ENCODE measurements at regions of chr6 and their contacts with region 1.

Region 1: DNA sequence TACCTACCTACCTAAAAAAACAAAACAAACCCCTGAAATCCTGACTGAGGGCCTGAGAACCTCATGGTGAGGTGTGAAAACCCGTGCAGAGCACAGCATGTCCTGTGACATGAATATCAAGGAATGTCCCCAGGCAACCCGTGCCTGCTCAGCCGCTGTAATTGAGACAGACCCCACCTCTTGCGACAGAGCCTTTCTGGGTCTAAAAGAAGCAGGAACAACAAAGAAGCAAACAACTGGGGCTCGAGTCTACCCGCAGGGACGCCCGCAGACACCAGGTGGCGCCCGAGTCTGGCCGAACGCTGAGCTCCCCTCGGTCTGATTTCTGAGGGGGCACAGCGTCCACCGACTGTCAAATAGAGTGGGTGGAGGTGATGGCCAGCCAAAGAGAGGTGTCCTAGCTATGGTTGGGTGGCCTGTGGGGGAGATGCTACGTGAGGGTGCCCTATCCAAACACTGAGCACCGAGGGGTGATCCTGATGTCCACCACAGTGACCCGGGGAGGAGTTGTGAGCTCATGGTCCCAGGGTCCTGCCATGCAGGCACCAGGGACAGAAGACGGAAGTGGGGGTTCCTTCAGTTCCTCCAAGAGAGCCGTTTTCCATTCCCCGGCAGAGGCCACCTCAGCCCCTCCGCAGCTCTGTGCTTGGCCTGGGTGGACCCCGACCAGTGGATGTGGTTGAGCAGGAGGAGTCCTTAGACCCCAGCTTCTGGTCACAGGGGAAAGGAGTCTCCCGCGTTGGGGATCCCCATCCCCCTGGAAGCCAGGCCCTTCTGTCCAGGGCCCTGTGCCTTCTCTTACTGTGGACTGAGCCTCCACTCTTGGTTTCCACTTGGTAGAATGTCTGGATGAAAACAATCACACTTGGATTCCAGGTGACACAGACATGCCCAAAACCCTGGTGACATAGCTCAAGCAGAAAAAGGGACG is 268.2 kb downstream of the CDC5L start:
- DNase-seq: peak; percentile 84
- H3K4me3 ChIP-seq: no peak overlapping the region
- H3K27ac ChIP-seq: no peak overlapping the region
- H3K4me1 ChIP-seq: no peaks in the 10 kb centered on the region
- H3K27me3 ChIP-seq: no peaks in the 10 kb centered on the region
- CTCF ChIP-seq: peak; percentile 98

Region 2: GRCh38 chr6:44512868-44513741 is 142.6 kb before region 1 on chr6:
- CTCF ChIA-PET with region 1: no interaction called
- POLR2A ChIA-PET with region 1: no interaction called
- intact Hi-C with region 1: no loop called
- DNase-seq: peak; percentile 87
- H3K4me3 ChIP-seq: no peak overlapping the region
- H3K27ac ChIP-seq: no peak overlapping the region
- H3K4me1 ChIP-seq: peaks cover 12% of the 10 kb centered on the region
- H3K27me3 ChIP-seq: no peaks in the 10 kb centered on the region
- CTCF ChIP-seq: no peak

Region 3: DNA sequence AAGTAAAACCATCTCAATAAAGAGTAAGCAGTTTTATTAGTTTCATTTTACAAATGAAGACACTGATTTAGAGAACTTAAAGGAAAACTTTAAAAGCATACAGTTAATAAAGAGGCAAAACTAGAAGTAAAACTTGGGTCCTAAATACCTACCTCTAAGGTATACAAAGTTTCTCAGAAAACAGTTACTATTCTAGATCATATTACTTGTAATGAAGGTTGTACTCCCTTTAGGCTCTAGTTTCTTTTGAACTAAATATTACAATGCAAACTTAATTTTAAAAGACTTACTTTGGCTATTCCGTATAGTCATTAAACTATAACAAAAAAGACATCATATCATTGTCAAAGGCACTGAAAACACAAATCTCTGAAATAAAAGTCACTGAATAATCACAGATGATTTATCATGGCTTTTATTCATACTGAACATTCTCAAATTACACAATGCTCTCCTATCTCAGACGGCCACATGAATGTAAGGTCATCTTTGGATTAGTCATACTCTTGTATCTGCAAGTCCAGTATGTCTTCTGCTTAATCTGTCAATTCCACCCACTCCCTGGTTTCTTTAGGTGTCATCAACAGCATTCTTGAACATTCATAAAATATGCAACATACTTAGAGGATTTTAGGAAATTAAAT is 310.9 kb after region 1 on chr6:
- CTCF ChIA-PET with region 1: no interaction called
- POLR2A ChIA-PET with region 1: no interaction called
- intact Hi-C with region 1: no loop called
- DNase-seq: peak; percentile 25
- H3K4me3 ChIP-seq: no peak overlapping the region
- H3K27ac ChIP-seq: no peak overlapping the region
- H3K4me1 ChIP-seq: peaks cover 29% of the 10 kb centered on the region
- H3K27me3 ChIP-seq: no peaks in the 10 kb centered on the region
- CTCF ChIP-seq: no peak

Region 4: DNA sequence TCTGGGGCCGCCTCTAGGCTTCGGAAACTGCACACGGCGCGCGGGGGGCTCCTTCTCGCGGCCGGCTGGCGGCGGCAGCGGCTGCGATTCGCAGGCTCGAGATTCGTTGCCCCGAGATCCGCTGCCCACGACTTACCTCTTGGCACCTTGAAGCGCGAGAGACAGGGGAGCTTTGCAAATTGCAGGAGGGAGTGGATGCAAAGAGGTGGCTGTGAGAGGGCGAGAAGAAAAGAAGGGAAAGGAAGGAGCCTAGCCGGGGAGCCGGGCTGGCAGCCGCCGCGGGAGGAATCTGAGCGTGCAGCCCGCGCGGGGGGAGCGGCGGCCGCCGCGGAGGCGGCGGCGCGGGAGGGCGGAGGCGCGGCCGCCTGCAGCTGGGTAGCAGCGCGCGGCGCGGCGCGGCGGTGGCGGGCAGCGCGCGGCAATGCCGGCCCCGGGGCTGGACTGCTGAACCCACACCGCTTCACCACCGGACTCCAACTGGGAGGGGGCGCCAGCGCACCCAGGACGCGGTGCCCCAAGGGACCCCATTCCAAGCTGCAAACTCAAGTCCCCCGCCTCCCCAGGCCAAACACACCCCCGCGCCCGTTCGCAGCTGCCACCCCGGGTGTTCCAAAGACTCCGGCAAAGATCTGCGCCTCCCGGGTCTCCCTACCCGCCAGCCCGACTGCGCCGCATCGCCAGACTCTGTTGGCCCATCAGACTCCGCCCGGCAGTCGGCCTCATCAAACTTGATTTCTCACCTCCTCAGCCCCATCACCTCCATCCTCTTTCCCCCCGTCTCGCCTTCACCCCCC is 766.2 kb after region 1 on chr6:
- CTCF ChIA-PET with region 1: interaction called, 3 read pairs
- POLR2A ChIA-PET with region 1: no interaction called
- intact Hi-C with region 1: loop called (anchors 10 kb)
- DNase-seq: peak; percentile 72
- H3K4me3 ChIP-seq: peak overlapping the region; percentile 86
- H3K27ac ChIP-seq: peak overlapping the region; percentile 49
- H3K4me1 ChIP-seq: peaks cover 13% of the 10 kb centered on the region
- H3K27me3 ChIP-seq: peaks cover 11% of the 10 kb centered on the region
- CTCF ChIP-seq: peak; percentile 55

Region 5: DNA sequence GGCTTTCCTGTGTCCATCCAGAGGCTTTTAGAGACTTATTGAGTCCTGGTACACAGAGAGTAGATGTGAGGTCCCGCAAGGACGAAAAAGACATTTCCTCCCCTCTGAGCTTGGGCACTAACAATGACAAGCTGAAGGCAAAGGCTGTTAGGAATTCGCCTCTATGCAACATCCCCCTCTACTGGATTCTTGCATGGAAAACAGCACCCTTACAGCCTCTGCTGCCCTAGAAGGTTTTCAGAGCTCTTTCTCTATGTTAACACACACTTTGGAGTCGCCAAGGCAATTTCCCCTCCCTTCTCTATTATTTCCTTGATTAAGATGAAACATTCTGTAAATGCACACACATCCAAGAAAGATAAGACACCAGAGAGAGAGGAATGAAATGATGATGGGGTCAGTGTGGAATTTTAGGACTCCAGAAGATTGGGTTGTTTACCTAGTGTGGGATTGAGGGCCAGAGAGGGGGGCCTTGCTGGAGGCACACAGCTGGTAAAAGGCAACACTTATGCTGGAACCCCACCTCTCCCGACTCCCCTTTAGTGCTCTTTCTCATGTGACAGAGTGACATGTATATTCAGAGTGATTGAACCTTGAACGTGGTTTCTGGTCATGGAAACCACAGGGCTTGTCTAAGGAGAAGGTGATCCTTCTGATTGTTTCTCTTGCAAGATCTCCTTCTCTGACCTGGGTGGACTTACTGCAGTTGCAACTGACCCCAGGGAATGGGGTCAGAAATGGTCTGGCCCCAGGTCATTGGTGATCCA is 1059.2 kb after region 1 on chr6:
- CTCF ChIA-PET with region 1: interaction called, 22 read pairs
- POLR2A ChIA-PET with region 1: no interaction called
- intact Hi-C with region 1: loop called (anchors 1 kb)
- DNase-seq: peak; percentile 87
- H3K4me3 ChIP-seq: no peak overlapping the region
- H3K27ac ChIP-seq: no peak overlapping the region
- H3K4me1 ChIP-seq: peaks cover 5% of the 10 kb centered on the region
- H3K27me3 ChIP-seq: no peaks in the 10 kb centered on the region
- CTCF ChIP-seq: peak; percentile 84

Region 6: GRCh38 chr6:45922728-45923351 is 1267.2 kb after region 1 on chr6:
- CTCF ChIA-PET with region 1: interaction called, 10 read pairs
- POLR2A ChIA-PET with region 1: no interaction called
- intact Hi-C with region 1: loop called (anchors 2 kb)
- DNase-seq: peak; percentile 66
- H3K4me3 ChIP-seq: no peak overlapping the region
- H3K27ac ChIP-seq: no peak overlapping the region
- H3K4me1 ChIP-seq: no peaks in the 10 kb centered on the region
- H3K27me3 ChIP-seq: no peaks in the 10 kb centered on the region
- CTCF ChIP-seq: peak; percentile 76

Measured in A673 (cell line).